Activated CD4-positive, alpha-beta T cell treated with anti-CD3 and anti-CD28 coated beads, Interleukin-2, amount 10 ng/mL, durations not matched to agents 24 days and 14 days (primary cell): ENCODE measurements at regions of chr6 and their contacts with region 1.

Region 1: GRCh38 chr6:139515511-139515910 is 141.1 kb upstream of the CITED2 start:
- DNase-seq: no peak
- H3K4me3 Mint-ChIP-seq: no peak overlapping the region
- H3K27ac Mint-ChIP-seq: no peak overlapping the region
- H3K4me1 Mint-ChIP-seq: peaks cover 4% of the 10 kb centered on the region
- H3K27me3 Mint-ChIP-seq: peaks cover 2% of the 10 kb centered on the region

Region 2: GRCh38 chr6:139529420-139529819 is 13.9 kb after region 1 on chr6:
- intact Hi-C with region 1: loop called (anchors 2 kb)
- DNase-seq: no peak
- H3K4me3 Mint-ChIP-seq: no peak overlapping the region
- H3K27ac Mint-ChIP-seq: peak overlapping the region; percentile 55
- H3K4me1 Mint-ChIP-seq: peaks cover 31% of the 10 kb centered on the region
- H3K27me3 Mint-ChIP-seq: no peaks in the 10 kb centered on the region

Region 3: DNA sequence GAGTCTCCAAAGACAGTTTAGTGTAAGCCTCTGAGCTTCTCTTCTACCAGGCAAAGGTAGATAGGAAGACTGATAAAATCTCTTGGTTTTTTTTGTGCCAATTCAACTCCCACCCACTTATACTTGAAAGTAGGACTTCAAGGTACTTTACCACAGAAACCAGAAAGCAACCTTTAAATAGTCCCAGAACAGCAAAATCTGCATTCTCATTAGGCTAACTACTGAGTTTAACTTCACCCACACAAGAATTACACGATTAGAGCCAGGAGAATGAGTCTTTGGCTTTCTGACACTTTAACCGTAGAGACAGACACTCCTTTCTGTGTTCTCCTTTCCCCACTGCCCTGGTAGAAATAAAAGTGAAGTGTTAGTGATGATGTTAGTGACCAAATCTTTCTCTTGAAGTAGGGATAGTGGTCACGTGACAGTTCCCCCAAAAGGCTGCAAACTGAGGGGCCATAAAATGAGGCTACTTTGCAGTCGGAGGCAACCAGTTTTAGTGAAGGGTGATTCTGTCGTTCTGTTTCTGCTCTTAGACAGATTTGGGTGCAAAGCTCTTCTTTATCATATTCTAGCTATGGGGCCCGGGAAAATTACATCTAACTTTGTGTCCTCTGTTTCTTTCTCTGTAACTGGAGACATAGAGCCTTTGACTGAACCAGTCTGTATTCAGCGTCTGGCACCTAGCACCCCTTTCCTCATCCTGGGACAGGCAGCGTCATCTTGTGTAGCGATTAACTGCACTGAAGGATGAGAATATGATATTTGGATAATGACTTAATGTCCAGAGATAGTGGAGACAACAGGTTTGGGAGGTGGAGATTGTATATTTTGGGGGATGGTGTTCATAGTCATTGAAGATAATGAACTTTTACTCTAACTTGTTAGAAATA is 65.3 kb after region 1 on chr6:
- intact Hi-C with region 1: loop called (anchors 2 kb)
- DNase-seq: no peak
- H3K4me3 Mint-ChIP-seq: peak overlapping the region; percentile 38
- H3K27ac Mint-ChIP-seq: peak overlapping the region; percentile 14
- H3K4me1 Mint-ChIP-seq: peaks cover 16% of the 10 kb centered on the region
- H3K27me3 Mint-ChIP-seq: peaks cover 7% of the 10 kb centered on the region

Region 4: DNA sequence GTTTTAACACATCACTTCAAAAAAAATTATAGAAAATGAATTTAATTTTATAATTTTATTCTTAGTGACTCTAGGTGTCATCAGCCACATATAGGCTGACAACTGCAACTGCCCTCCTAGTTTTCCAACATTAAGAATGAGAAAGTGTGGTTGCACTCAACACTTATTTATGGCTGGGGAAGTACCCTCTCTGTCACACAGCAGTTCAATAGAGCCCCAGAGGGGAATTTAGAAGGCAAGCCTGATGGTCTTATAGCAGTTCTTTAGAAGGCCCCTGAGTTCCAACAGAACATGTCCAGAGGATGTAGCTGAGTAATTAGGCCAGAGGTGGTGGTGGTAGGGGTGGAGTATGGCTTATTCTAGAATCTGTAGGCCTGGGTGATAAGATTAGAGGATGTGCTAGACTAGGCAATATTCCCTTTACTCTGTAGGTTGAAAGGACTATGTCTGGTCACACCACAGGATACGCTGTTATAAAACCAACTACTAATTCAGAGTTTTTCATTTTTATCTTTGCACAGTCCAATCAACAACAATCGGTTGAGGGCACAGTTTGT is 85.5 kb after region 1 on chr6:
- intact Hi-C with region 1: loop called (anchors 1 kb)
- DNase-seq: no peak
- H3K4me3 Mint-ChIP-seq: no peak overlapping the region
- H3K27ac Mint-ChIP-seq: peak overlapping the region; percentile 75
- H3K4me1 Mint-ChIP-seq: peaks cover 6% of the 10 kb centered on the region
- H3K27me3 Mint-ChIP-seq: no peaks in the 10 kb centered on the region